ENCODE measurements at regions of chr9 and their contacts with region 1.

Region 1: GRCh38 chr9:136439550-136440408 is at the start of gene INPP5E:
- DNase-seq: no peak
- H3K4me3 ChIP-seq: peak within 1 kb of the TSS; percentile 72
- CTCF ChIP-seq: peak; percentile 74

Region 2: GRCh38 chr9:136424750-136425362 is 14.9 kb before region 1 on chr9:
- CTCF ChIA-PET with region 1: interaction called, 13 read pairs
- POLR2A ChIA-PET with region 1: interaction called, 3 read pairs
- DNase-seq: no peak
- H3K4me3 ChIP-seq: no peak overlapping the region
- CTCF ChIP-seq: no peak

Region 3: GRCh38 chr9:136451221-136451877 is 11.6 kb after region 1 on chr9:
- CTCF ChIA-PET with region 1: interaction called, 16 read pairs
- POLR2A ChIA-PET with region 1: no interaction called
- DNase-seq: no peak
- H3K4me3 ChIP-seq: no peak overlapping the region
- CTCF ChIP-seq: no peak

Region 4: DNA sequence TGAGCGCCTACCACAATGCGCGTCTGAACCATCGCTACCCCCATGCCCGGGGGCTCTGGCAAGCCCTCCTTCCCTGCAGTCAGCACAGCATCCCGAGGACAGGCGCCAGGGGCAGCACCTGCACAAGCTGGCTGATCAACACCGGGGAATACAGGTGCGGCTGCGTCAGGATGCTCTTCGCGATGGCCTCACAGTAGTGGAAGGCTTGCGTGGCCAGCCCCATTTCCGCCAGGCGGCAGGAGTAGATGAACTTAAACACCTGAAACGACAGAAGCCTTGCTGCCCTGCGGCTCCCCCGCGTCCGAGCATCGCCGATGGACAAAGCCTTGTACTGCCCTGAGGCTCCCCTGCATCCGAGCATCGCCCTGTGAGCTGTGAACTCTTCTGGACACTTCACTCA is 17.5 kb after region 1 on chr9:
- CTCF ChIA-PET with region 1: interaction called, 16 read pairs
- POLR2A ChIA-PET with region 1: no interaction called
- DNase-seq: no peak
- H3K4me3 ChIP-seq: no peak overlapping the region
- CTCF ChIP-seq: no peak

Region 5: DNA sequence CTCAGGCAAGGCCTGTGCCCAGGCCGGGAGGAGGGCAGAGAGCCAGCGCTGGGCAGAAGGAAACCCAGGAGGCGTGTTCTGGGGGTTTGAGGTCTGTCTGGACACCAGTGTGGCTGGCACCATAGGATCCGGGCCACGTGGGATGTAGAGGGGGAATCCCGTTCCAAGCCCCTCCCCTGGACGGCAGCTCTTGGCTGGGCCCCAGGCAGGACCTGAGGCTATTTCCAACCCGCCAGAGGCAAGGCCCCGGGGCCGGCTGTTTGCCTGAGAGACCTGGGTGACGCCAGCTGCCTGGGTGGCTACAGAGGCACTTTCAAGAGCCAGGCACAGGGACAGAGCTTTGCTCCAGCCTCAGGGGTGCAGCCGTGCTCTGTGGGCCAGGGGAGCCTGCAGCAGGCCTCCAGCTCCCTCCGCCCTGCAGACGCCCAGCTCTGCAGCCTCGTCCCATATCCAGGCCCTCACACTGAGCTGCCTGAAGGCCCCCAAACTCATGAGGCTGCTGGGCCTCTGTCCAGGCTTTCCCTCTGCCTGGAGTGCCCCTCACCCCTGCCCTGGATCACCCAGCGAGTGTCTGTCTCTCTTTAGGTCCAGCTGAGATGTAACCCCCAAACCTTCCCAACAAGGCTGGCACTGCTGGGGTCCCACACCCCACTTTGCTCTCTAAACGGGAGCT is 166.3 kb after region 1 on chr9:
- CTCF ChIA-PET with region 1: no interaction called
- POLR2A ChIA-PET with region 1: no interaction called
- DNase-seq: no peak
- H3K4me3 ChIP-seq: no peak overlapping the region
- CTCF ChIP-seq: no peak

Region 6: DNA sequence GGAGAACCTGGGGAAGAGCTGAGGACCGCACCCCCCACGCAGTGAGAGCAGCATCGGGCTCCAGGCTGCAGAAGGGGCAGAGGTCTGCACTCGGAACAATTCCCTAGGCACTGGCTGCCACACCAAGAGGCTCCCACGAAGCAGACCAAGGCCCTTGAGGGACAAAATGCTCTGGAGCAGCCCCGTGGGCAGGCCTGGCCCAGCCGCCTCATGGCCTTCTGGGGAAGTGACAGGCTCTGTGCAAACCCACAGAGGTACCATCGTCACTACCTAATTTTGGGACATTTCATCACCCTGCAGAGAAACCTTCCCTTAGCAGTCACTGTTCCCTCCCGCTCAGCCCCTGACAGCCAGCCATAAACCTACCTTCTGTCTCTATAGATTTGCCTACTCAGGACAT is 488.8 kb after region 1 on chr9:
- CTCF ChIA-PET with region 1: no interaction called
- POLR2A ChIA-PET with region 1: no interaction called
- DNase-seq: no peak
- H3K4me3 ChIP-seq: no peak overlapping the region
- CTCF ChIP-seq: no peak